Esophagus muscularis mucosa (tissue), 4 donors: ENCODE measurements at regions of chr2 and their contacts with region 1.

Region 1: GRCh38 chr2:39124000-39124745 is 3.3 kb upstream of the SOS1 start:
- DNase-seq: peak; percentile 96
- H3K4me3 ChIP-seq: peak overlapping the region; percentile 67 to 86 (median 75)
- H3K27ac ChIP-seq: peak overlapping the region; percentile 89 to 96 (median 94)
- H3K4me1 ChIP-seq: peaks cover 26 to 62% (median 59%) of the 10 kb centered on the region in 4 donors
- H3K27me3 ChIP-seq: no peaks in the 10 kb centered on the region
- CTCF ChIP-seq: peak; percentile 47 to 52 (median 51)
- EP300 ChIP-seq: no peak
- POLR2A ChIP-seq: peak; percentile 40

Region 2: GRCh38 chr2:39069136-39069515 is 55.0 kb before region 1 on chr2:
- intact Hi-C with region 1: loop called (anchors 5 kb)
- DNase-seq: no peak
- H3K4me3 ChIP-seq: no peak overlapping the region
- H3K27ac ChIP-seq: no peak overlapping the region
- H3K4me1 ChIP-seq: peaks cover 0 to 36% (median 23%) of the 10 kb centered on the region in 4 donors
- H3K27me3 ChIP-seq: no peaks in the 10 kb centered on the region
- CTCF ChIP-seq: no peak
- EP300 ChIP-seq: no peak
- POLR2A ChIP-seq: no peak

Region 3: GRCh38 chr2:39080152-39080551 is 44.0 kb before region 1 on chr2:
- intact Hi-C with region 1: no loop called
- DNase-seq: no peak
- H3K4me3 ChIP-seq: no peak overlapping the region
- H3K27ac ChIP-seq: no peak overlapping the region
- H3K4me1 ChIP-seq: peaks cover 0 to 48% (median 15%) of the 10 kb centered on the region in 4 donors
- H3K27me3 ChIP-seq: no peaks in the 10 kb centered on the region
- CTCF ChIP-seq: no peak
- EP300 ChIP-seq: no peak
- POLR2A ChIP-seq: no peak

Region 4: DNA sequence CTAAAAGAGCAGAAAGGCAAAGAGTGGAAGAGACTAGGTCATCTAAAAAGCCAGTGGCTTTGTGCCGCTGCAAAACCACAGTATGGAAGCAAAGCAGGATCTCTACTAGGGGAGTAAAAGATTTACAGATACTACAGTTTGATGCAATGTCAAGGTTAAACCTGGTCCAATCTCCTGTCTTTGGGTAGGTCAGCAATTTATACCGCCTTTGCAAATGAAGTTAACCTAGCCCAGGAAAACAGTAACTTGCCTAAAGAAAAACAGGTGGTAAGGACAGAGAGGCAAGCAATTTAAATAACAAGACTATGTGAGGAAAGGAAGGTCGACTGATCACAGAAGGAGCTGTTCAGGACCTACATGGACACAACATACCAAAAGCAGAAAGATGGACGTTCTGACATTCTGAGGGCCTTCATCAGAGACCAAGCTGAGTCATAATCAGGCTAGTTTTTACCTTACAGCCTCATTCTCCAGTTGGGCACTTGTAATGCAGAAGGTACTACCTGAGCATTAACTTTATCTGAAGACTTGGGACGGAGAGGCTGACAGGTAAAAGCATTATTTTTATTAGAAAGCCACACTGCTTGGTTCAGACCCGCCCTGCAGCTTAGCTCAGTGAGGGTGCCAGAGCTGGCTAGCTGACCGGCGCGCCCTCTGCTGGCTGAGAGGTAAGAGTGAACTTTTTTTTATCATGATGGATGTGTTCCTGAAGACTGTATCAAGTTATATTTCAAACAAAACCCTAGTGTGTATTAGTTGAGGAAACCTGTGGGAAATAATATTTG is 103.6 kb after region 1 on chr2:
- intact Hi-C with region 1: loop called (anchors 1 kb)
- DNase-seq: no peak
- H3K4me3 ChIP-seq: peak overlapping the region; percentile 24 to 39 (median 30)
- H3K27ac ChIP-seq: no peak overlapping the region
- H3K4me1 ChIP-seq: peaks cover 15 to 27% (median 26%) of the 10 kb centered on the region in 4 donors
- H3K27me3 ChIP-seq: no peaks in the 10 kb centered on the region
- CTCF ChIP-seq: peak; percentile 88 to 92 (median 88)
- EP300 ChIP-seq: no peak
- POLR2A ChIP-seq: no peak